Dendritic cell treated with granulocyte-macrophage colony-stimulating factor and Interleukin-4, amounts not matched to agents 40 ng/mL and 50 ng/mL, for 4 days (primary cell): ENCODE measurements at regions of chr2 and their contacts with region 1.

Region 1: DNA sequence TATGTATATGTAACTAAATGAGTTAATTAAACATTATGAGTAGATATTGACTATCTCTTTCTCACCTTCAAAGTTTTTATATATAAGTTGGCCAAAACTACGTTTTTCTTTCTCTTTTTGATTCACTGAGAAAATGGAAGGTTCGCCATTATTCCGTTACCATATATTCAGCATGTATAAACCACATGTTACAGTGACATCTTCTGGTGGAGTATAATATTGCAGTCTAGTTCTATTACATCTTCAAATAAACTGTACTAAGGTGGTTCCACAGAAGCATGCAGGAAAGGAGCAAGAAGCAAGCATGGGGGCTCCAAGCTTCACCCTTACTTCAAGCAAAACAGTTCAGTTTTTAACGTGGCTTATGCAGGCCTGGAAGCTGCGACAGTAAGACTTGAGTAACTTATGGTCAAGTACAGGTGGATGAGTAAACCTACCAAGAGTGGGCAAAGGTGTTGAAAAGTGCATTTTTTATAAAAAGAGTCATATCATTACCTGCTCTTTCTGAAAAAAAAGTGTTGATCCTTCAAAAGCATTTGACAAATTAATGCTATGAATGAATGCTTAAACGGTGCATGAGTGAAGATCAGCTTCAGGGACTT is 129.8 kb upstream of the RAB6C start:
- H3K4me3 Mint-ChIP-seq: no peak overlapping the region
- H3K27ac Mint-ChIP-seq: no peak overlapping the region
- H3K4me1 Mint-ChIP-seq: peaks cover 10% of the 10 kb centered on the region
- H3K27me3 Mint-ChIP-seq: peaks cover 5% of the 10 kb centered on the region

Region 2: DNA sequence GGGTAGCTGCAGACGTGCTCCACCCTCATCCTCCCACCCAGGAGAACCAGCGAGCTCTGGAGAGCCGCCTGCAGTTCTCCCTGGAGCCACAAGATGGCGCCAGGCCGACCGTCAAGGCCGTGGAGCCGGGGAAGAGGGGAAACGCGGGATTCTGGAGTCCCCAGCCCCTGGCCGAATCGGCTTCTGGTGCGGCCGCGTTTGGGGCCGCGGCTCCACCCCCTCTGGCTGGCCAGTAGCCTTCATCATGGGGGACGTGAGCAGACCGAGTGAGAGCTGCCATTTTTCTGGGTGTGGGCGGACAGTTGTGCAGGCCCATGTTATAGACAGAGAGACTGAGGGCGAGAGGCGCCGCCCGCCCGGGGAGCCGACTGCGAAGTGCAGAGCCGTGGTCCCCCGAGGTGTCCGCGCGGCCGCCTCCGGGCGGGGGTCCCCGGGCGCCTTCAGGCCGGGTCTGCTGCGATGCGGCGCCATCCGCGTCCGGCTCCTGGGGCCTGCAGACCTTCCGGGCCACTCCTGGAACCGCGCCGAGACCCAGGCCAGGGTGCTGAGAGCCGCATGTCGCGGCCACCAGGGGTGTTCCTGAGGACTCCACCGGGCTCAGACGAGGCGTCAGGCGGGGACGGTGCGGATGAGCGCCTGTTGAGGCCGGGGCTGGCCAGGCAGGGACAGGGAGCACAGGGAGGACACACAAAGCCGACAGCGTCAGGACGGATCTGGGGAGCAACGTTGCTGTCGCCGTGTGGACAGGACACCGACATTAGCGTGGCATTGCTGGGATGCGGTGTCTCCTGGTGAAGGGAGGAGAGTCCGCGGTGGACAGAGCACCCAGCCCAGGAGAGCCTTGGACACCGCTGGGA is 1112.7 kb before region 1 on chr2:
- intact Hi-C with region 1: loop called (anchors 1 kb)
- H3K4me3 Mint-ChIP-seq: peak overlapping the region; percentile 74
- H3K27ac Mint-ChIP-seq: peak overlapping the region; percentile 62
- H3K4me1 Mint-ChIP-seq: peaks cover 44% of the 10 kb centered on the region
- H3K27me3 Mint-ChIP-seq: peaks cover 17% of the 10 kb centered on the region

Region 3: DNA sequence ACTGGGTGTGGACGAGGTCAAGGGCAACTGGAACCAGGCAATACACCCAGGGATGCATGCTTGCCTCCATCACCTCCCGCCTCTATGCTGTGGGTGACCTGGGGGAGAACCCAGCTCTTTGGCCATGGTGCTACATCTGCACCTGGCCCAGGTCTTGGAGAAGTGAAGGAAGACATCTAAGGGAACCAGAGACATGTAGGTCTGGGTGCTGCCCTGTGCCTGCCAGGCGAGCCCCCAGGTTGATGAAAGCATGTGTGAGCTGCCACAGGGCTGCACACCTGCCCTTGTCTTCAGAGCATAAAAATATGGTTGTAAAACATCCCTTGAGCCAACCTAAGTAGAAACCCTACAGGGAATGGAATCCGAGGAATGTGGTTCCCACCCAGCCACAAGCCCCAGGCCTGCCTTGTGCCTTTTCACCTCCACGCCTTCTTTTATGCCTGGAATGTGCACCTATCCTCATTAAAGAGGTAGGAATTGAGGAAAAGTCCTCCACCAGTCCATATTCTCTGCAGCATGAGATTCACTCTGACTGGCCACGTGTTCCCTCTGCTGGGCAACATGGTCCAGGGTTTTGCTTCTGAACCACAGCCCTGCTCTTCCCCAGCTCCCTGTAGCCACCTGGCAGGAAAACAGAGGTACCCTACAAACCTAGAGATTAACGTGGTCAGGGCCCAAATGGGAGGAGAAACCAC is 658.3 kb before region 1 on chr2:
- intact Hi-C with region 1: loop called (anchors 5 kb)
- H3K4me3 Mint-ChIP-seq: no peak overlapping the region
- H3K27ac Mint-ChIP-seq: no peak overlapping the region
- H3K4me1 Mint-ChIP-seq: no peaks in the 10 kb centered on the region
- H3K27me3 Mint-ChIP-seq: no peaks in the 10 kb centered on the region

Region 4: GRCh38 chr2:129777762-129778582 is 71.7 kb before region 1 on chr2:
- intact Hi-C with region 1: no loop called
- H3K4me3 Mint-ChIP-seq: no peak overlapping the region
- H3K27ac Mint-ChIP-seq: no peak overlapping the region
- H3K4me1 Mint-ChIP-seq: no peaks in the 10 kb centered on the region
- H3K27me3 Mint-ChIP-seq: peaks cover 26% of the 10 kb centered on the region